H1 (cell line): ENCODE measurements at regions of chr17 and their contacts with region 1.

Region 1: GRCh38 chr17:44844390-44844830 is 3.3 kb upstream of the HIGD1B start:
- DNase-seq: no peak
- H3K4me3 ChIP-seq: no peak overlapping the region
- H3K27ac ChIP-seq: no peak overlapping the region
- H3K4me1 ChIP-seq: peaks cover 6 to 22% (median 11%) of the 10 kb centered on the region in 4 experiments
- H3K27me3 ChIP-seq: no peaks in the 10 kb centered on the region
- CTCF ChIP-seq: peak in 1 of 3 experiments; percentile 14; a peak in 1 of 4 replicates
- EP300 ChIP-seq: no peak
- POLR2A ChIP-seq: no peak
- RAD21 ChIP-seq: peak in 1 of 2 experiments; percentile 25; a peak in 1 of 4 replicates

Region 2: GRCh38 chr17:44878627-44879221 is 34.3 kb after region 1 on chr17:
- CTCF ChIA-PET with region 1: interaction called, 11 read pairs
- POLR2A ChIA-PET with region 1: interaction called, 4 read pairs
- DNase-seq: no peak
- H3K4me3 ChIP-seq: no peak overlapping the region
- H3K27ac ChIP-seq: no peak overlapping the region
- H3K4me1 ChIP-seq: no peaks in the 10 kb centered on the region
- H3K27me3 ChIP-seq: no peaks in the 10 kb centered on the region
- CTCF ChIP-seq: peak in 2 of 3 experiments; percentile 39 to 61; a peak in 2 of 4 replicates
- EP300 ChIP-seq: no peak
- POLR2A ChIP-seq: no peak
- RAD21 ChIP-seq: peak; percentile 41 to 44

Region 3: GRCh38 chr17:44956998-44957981 is 112.9 kb after region 1 on chr17:
- CTCF ChIA-PET with region 1: no interaction called
- POLR2A ChIA-PET with region 1: no interaction called
- DNase-seq: no peak
- H3K4me3 ChIP-seq: no peak overlapping the region
- H3K27ac ChIP-seq: no peak overlapping the region
- H3K4me1 ChIP-seq: peaks cover 0 to 14% (median 4%) of the 10 kb centered on the region in 4 experiments; a peak in 4 of 7 replicates
- H3K27me3 ChIP-seq: peaks cover 0 to 27% (median 20%) of the 10 kb centered on the region in 4 experiments; a peak in 5 of 7 replicates
- CTCF ChIP-seq: no peak
- EP300 ChIP-seq: no peak
- POLR2A ChIP-seq: no peak
- RAD21 ChIP-seq: no peak